ENCODE measurements at regions of chr4 and their contacts with region 1.

Region 1: DNA sequence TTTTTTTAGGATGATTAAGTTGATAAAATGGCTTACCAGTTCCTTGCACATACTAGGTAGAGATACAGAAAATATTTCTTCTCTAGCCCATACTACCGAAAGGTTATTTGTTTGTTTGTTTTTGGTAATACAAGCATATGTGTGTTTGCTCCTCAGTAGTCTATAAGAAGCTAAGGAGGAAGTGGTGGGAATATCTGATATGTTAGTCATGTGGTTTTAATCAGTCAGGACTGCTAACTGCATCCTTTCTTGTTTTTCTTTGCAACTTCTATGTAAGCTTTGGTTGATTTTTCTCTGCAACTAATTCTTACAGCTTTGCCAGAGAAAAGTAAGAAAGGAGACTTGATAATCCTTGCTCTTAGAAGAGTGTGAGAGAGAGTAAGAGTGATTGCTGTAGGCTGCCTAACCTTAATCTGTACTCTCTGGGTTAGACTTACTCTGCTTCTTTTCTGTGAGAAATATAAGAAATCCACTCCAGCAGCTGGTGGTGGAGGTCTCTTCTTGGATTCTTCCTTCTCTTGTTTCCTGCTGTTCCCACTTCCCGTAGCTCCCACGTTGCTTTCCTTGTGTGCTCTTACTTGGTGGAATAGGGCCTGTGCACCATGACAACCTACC is 28.3 kb downstream of the SEPTIN11 start:
- DNase-seq: peak; percentile 72
- H3K4me3 ChIP-seq: no peak overlapping the region
- H3K27ac ChIP-seq: peak overlapping the region; percentile 77
- H3K4me1 ChIP-seq: peaks cover 37% of the 10 kb centered on the region
- H3K27me3 ChIP-seq: no peaks in the 10 kb centered on the region
- CTCF ChIP-seq: no peak
- POLR2A ChIP-seq: no peak

Region 2: GRCh38 chr4:76954489-76954888 is 23.4 kb before region 1 on chr4:
- CTCF ChIA-PET with region 1: interaction called, 14 read pairs
- POLR2A ChIA-PET with region 1: no interaction called
- dilution Hi-C with region 1: no loop called
- intact Hi-C with region 1: loop called (anchors 1 kb)
- DNase-seq: peak; percentile 59
- H3K4me3 ChIP-seq: no peak overlapping the region
- H3K27ac ChIP-seq: no peak overlapping the region
- H3K4me1 ChIP-seq: peaks cover 12% of the 10 kb centered on the region
- H3K27me3 ChIP-seq: no peaks in the 10 kb centered on the region
- CTCF ChIP-seq: no peak
- POLR2A ChIP-seq: no peak

Region 3: GRCh38 chr4:76965865-76966579 is 11.8 kb before region 1 on chr4:
- CTCF ChIA-PET with region 1: interaction called, 12 read pairs
- POLR2A ChIA-PET with region 1: no interaction called
- dilution Hi-C with region 1: no loop called
- intact Hi-C with region 1: no loop called
- DNase-seq: no peak
- H3K4me3 ChIP-seq: no peak overlapping the region
- H3K27ac ChIP-seq: no peak overlapping the region
- H3K4me1 ChIP-seq: no peaks in the 10 kb centered on the region
- H3K27me3 ChIP-seq: no peaks in the 10 kb centered on the region
- CTCF ChIP-seq: no peak
- POLR2A ChIP-seq: no peak

Measured in endothelial cell of umbilical vein (primary cell).